ENCODE measurements at regions of chr2 and their contacts with region 1.

Region 1: DNA sequence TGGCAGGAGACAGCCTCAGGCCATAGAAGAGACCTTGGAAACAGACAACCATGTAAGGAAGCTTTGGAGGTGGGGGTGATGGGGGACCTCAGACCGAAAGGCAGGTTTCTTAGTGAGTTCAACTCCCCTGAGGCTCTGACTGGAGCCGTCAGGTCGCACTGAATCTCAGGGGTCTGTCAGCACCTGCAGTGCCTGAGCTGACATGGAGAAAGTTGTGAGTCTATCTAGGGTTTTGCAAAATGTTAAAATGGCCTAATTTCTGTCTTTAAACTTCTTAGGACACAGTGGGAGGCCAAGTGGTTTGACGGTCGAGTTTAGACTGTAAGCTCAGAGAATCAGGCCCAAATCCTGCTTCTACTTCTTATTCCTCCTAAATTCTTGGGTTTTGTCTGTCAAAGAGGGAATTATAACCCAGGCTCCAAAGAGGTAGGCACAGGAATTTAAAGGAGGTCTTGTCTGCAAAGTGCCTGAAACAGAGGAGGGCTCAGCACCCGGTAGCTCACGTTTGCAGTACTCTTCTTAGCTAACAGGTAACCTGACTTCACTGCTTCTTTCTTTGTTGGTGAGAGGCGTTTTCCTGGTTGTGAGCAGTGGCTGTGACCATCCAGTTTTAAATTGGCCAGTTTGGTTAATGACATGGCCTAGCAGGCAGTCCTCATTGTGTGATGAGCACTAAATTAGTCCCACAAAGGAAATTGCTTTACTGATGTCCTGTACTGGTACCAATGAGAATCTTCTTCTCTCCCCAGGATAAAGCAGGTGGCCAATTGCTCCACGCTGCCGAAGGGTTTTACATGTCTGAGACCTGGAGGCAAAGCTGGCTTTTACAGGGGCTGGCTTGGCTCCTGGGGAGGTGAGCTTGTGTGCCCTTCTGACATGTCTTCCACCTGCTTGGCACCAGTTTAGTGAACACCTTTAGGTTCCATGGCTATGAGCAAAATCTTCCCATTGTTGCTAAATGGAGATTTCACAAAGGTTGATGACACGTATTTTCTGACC is 95.7 kb downstream of the MYCN start:
- DNase-seq: no peak
- H3K4me3 ChIP-seq: no peak overlapping the region
- H3K27ac ChIP-seq: no peak overlapping the region
- H3K4me1 ChIP-seq: no peaks in the 10 kb centered on the region
- CTCF ChIP-seq: no peak

Region 2: DNA sequence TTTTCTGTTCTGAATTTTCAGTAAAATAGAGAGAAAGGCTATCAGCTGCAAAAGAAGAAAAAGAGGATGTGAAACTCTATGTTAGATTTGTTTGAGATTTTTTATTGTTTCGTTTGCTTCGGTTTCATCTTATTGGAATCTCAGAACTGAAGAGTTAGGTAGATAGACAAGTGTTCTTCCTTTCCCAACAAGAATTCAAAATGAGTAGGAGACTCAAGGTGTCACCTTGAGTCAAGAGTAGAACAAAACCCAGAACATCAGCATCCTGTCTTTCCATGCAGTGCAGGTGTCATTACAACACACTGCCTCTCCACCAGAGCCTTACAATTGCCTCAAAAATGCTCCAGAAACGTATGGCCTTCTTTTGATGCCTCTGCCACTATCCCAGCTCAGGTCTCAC is 496.0 kb before region 1 on chr2:
- CTCF ChIA-PET with region 1: no interaction called
- POLR2A ChIA-PET with region 1: no interaction called
- intact Hi-C with region 1: no loop called
- DNase-seq: peak; percentile 57
- H3K4me3 ChIP-seq: no peak overlapping the region
- H3K27ac ChIP-seq: peak overlapping the region; percentile 48
- H3K4me1 ChIP-seq: peaks cover 20% of the 10 kb centered on the region
- CTCF ChIP-seq: no peak

Region 3: DNA sequence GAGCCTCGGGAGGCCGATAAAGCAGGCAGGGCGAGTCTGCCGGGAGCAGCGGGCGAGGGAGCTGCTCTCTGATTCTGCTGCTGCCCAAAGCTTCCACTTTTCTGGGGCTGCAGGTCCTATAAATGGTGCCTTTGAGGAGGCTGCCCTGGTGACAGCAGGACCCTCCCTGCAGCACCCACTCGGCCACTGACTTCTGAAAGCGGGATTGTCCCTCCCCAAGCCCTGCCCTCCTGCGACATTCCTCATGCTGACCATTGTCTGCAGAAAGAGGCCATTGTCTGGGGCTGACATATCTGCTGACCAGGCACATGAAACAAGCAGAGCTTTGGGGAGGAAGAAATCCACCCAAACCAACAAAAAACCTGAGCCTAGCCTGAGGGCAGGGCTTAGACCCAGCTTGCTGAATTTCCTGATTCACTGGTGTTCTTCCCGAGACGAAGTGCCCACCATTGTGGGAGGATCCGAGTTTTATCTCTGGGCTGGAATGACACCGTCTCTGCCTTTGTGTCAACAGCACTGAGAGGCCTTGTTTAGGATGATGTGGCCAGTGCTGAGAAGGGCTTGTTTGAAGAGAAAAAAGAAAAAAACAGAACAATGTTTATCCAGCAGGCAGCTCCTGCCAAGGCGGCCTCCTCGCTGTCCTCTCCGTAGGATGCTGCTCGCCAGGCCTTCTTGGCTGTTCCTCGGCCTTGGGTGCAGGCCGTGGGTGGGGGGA is 34.0 kb after region 1 on chr2:
- CTCF ChIA-PET with region 1: no interaction called
- POLR2A ChIA-PET with region 1: interaction called, 10 read pairs
- intact Hi-C with region 1: no loop called
- DNase-seq: no peak
- H3K4me3 ChIP-seq: no peak overlapping the region
- H3K27ac ChIP-seq: no peak overlapping the region
- H3K4me1 ChIP-seq: no peaks in the 10 kb centered on the region
- CTCF ChIP-seq: no peak

Region 4: GRCh38 chr2:16257322-16258028 is 221.4 kb after region 1 on chr2:
- CTCF ChIA-PET with region 1: no interaction called
- POLR2A ChIA-PET with region 1: no interaction called
- intact Hi-C with region 1: no loop called
- DNase-seq: no peak
- H3K4me3 ChIP-seq: no peak overlapping the region
- H3K27ac ChIP-seq: no peak overlapping the region
- H3K4me1 ChIP-seq: no peaks in the 10 kb centered on the region
- CTCF ChIP-seq: no peak

Measured in OCI-LY7 (cell line).